Activated CD4-positive, alpha-beta memory T cell treated with anti-CD3 and anti-CD28 coated beads for 36 hours (primary cell): ENCODE measurements at regions of chr16 and their contacts with region 1.

Region 1: GRCh38 chr16:23803591-23804123 is 32.1 kb upstream of the PRKCB start:
- DNase-seq: peak; percentile 78
- H3K4me3 Mint-ChIP-seq: peak overlapping the region; percentile 17
- H3K27ac Mint-ChIP-seq: no peak overlapping the region
- H3K4me1 Mint-ChIP-seq: peaks cover 9% of the 10 kb centered on the region
- H3K27me3 Mint-ChIP-seq: no peaks in the 10 kb centered on the region

Region 2: GRCh38 chr16:23704772-23705516 is 98.7 kb before region 1 on chr16:
- CTCF ChIA-PET with region 1: no interaction called
- POLR2A ChIA-PET with region 1: no interaction called
- intact Hi-C with region 1: no loop called
- DNase-seq: no peak
- H3K4me3 Mint-ChIP-seq: no peak overlapping the region
- H3K27ac Mint-ChIP-seq: no peak overlapping the region
- H3K4me1 Mint-ChIP-seq: no peaks in the 10 kb centered on the region
- H3K27me3 Mint-ChIP-seq: peaks cover 5% of the 10 kb centered on the region

Region 3: DNA sequence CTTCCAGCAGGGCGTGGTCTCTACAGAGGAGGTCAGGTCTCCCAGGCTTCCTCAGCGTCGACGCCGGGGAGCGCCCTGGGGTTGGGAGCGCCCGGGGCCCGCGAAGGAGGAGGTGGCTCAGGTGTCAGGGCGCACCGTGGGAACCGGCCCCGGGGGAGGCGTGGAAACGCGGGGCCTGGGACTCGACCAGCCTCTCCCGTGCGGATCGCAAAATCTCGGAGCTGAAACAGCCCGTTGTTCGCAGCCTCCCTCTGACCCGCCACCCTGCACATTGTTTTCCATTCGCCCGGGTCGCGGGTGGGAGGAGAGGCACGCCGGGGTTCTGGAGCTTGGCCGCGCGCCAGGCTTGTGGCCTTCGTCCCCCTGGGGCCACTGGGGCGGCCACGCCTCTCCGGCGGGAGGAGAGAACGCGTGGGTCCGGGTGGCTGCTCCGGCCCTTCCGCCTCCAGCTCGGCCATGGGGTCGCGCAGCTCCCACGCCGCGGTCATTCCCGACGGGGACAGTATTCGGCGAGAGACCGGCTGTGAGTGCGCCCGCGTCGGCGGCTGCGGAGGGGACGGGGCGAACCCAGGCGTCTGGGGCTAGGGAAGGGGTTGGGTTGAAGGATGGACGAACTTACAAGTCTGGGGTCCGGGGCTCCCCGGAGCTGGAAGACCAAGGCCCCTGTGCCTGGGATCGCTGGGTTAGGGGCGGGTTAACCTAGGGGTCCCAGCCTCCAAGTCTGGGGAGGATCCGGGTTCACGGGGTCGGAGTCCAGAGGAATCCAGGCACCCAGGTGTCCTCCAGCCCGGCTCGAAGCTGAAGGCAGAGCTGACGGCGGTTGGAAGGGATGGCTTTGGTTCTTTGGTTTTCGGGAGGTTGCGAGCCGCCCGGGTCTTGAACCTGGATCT is 48.8 kb before region 1 on chr16 and contains the start of gene CHP2:
- CTCF ChIA-PET with region 1: no interaction called
- POLR2A ChIA-PET with region 1: no interaction called
- intact Hi-C with region 1: no loop called
- DNase-seq: no peak
- H3K4me3 Mint-ChIP-seq: no peak within 1 kb of the TSS
- H3K27ac Mint-ChIP-seq: no peak within 1 kb of the TSS
- H3K4me1 Mint-ChIP-seq: no peaks in the 10 kb centered on the region
- H3K27me3 Mint-ChIP-seq: peaks cover 40% of the 10 kb centered on the region
- total RNA-seq, gene CHP2: not detected

Region 4: GRCh38 chr16:23826528-23827045 is 22.9 kb after region 1 on chr16:
- CTCF ChIA-PET with region 1: interaction called, 9 read pairs
- POLR2A ChIA-PET with region 1: interaction called, 5 read pairs
- intact Hi-C with region 1: loop called (anchors 1 kb)
- DNase-seq: no peak
- H3K4me3 Mint-ChIP-seq: peak overlapping the region; percentile 43
- H3K27ac Mint-ChIP-seq: peak overlapping the region; percentile 62
- H3K4me1 Mint-ChIP-seq: peaks cover 20% of the 10 kb centered on the region
- H3K27me3 Mint-ChIP-seq: no peaks in the 10 kb centered on the region

Region 5: DNA sequence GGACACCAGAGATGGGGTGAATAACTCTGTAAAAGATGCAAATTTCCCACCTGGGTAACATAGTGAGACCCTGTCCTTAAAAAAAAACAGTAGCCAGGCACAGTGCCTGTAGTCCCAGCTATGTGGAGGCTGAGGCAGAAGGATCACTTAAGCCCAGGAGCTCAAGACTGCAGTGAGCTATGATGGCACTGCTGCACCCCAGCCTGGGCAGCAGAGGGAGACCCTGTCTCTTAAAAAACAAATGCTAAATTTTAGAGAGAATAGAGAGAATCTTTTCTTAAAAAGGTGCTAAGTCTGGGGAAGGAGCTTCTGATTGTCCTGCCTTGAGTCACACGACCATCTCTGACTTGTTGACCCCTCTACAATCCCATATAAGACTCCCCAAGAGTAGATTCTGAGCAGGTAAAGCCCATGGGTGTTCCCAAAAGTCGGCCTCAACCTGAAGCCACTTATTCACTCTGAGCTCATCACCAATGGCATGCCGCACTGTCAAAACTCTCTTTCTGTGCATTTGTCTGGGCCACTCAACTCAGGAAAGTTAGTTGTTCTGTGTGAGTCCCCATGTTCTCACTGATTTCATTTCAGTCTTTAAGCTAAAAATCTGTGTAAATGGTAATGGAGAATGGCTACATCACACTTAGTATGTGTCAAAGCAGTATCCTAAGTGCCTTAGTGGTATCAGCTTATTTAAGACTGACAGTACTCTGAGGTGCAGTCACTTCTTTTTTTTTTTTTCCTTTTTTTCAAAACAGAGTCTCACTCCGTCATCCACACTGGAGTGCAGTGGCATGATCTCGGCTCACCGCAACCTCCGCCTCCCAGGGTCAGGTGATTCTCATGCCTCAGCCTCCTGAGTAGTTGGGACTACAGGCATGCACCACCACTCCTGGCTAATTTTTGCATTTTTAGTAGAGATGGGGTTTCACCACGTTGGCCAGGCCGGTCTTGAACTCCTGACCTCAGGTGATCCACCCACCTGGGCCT is 73.7 kb after region 1 on chr16:
- CTCF ChIA-PET with region 1: interaction called, 13 read pairs
- POLR2A ChIA-PET with region 1: no interaction called
- intact Hi-C with region 1: no loop called
- DNase-seq: peak; percentile 65
- H3K4me3 Mint-ChIP-seq: no peak overlapping the region
- H3K27ac Mint-ChIP-seq: peak overlapping the region; percentile 49
- H3K4me1 Mint-ChIP-seq: peaks cover 73% of the 10 kb centered on the region
- H3K27me3 Mint-ChIP-seq: no peaks in the 10 kb centered on the region

Region 6: DNA sequence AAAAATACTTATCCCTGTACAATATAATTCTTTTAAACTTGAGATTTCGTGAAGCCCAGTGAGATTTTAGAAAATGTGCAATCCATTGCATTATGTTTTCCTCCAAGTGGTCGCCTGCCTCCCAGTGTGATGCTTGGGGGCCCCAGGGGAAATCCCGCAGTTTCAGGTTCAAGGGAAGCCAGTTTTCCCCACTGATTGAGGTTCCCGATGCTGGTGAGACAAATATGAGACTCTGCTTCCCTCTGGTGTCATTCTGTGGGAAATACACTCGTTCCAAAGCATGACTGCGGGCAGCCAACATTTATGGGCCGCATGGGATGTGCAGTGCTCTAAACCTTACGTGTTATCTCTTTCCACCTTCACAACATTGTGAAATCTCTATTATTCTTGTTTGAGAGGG is 233.0 kb after region 1 on chr16:
- CTCF ChIA-PET with region 1: interaction called, 112 read pairs
- POLR2A ChIA-PET with region 1: interaction called, 4 read pairs
- intact Hi-C with region 1: loop called (anchors 1 kb)
- DNase-seq: peak; percentile 36
- H3K4me3 Mint-ChIP-seq: no peak overlapping the region
- H3K27ac Mint-ChIP-seq: no peak overlapping the region
- H3K4me1 Mint-ChIP-seq: peaks cover 30% of the 10 kb centered on the region
- H3K27me3 Mint-ChIP-seq: no peaks in the 10 kb centered on the region

Region 7: GRCh38 chr16:24504472-24505345 is 701.1 kb after region 1 on chr16:
- CTCF ChIA-PET with region 1: interaction called, 11 read pairs
- POLR2A ChIA-PET with region 1: no interaction called
- intact Hi-C with region 1: loop called (anchors 2 kb)
- DNase-seq: peak; percentile 67
- H3K4me3 Mint-ChIP-seq: no peak overlapping the region
- H3K27ac Mint-ChIP-seq: no peak overlapping the region
- H3K4me1 Mint-ChIP-seq: no peaks in the 10 kb centered on the region
- H3K27me3 Mint-ChIP-seq: peaks cover 6% of the 10 kb centered on the region